GM12878 (cell line): ENCODE measurements at regions of chr2 and their contacts with region 1.

Region 1: GRCh38 chr2:213151437-213152064 is at the start of gene IKZF2:
- DNase-seq: peak; percentile 79
- ATAC-seq: peak; percentile 45
- H3K4me3 ChIP-seq: peak within 1 kb of the TSS; percentile 85
- H3K27ac ChIP-seq: peak within 1 kb of the TSS; percentile 92
- H3K4me1 ChIP-seq: peaks cover 4% of the 10 kb centered on the region
- H3K27me3 ChIP-seq: no peaks in the 10 kb centered on the region
- CTCF ChIP-seq: no peak
- EP300 ChIP-seq: peak in 1 of 2 experiments; percentile 19; a peak in 1 of 4 replicates
- POLR2A ChIP-seq: peak; percentile 88
- RAD21 ChIP-seq: no peak
- polyA plus RNA-seq, gene IKZF2: 15.2 to 22.5 TPM

Region 2: GRCh38 chr2:212863185-212863588 is 288.4 kb before region 1 on chr2:
- CTCF ChIA-PET with region 1: interaction called, 7 read pairs
- POLR2A ChIA-PET with region 1: no interaction called
- RAD21 ChIA-PET with region 1: interaction called, 12 read pairs
- SMC1A ChIA-PET with region 1: interaction called, 5 read pairs
- in situ Hi-C with region 1: no loop called
- intact Hi-C with region 1: loop called (anchors 1 kb)
- DNase-seq: peak; percentile 30
- ATAC-seq: peak; percentile 80
- H3K4me3 ChIP-seq: no peak overlapping the region
- H3K27ac ChIP-seq: no peak overlapping the region
- H3K4me1 ChIP-seq: no peaks in the 10 kb centered on the region
- H3K27me3 ChIP-seq: no peaks in the 10 kb centered on the region
- CTCF ChIP-seq: peak; percentile 52 to 69 (median 54); a peak in 4 of 6 replicates
- EP300 ChIP-seq: no peak
- POLR2A ChIP-seq: no peak
- RAD21 ChIP-seq: peak; percentile 82

Region 3: GRCh38 chr2:213036836-213037235 is 114.7 kb before region 1 on chr2:
- CTCF ChIA-PET with region 1: interaction called, 9 read pairs
- POLR2A ChIA-PET with region 1: interaction called, 7 read pairs
- RAD21 ChIA-PET with region 1: interaction called, 21 read pairs
- SMC1A ChIA-PET with region 1: interaction called, 28 read pairs
- in situ Hi-C with region 1: no loop called
- intact Hi-C with region 1: no loop called
- DNase-seq: no peak
- ATAC-seq: peak; percentile 2; the same call in 1 of the 3 replicates
- H3K4me3 ChIP-seq: no peak overlapping the region
- H3K27ac ChIP-seq: peak overlapping the region; percentile 17; the same call in 1 of the 2 replicates
- H3K4me1 ChIP-seq: peaks cover 26% of the 10 kb centered on the region
- H3K27me3 ChIP-seq: no peaks in the 10 kb centered on the region
- CTCF ChIP-seq: no peak
- EP300 ChIP-seq: no peak
- POLR2A ChIP-seq: no peak
- RAD21 ChIP-seq: no peak

Region 4: DNA sequence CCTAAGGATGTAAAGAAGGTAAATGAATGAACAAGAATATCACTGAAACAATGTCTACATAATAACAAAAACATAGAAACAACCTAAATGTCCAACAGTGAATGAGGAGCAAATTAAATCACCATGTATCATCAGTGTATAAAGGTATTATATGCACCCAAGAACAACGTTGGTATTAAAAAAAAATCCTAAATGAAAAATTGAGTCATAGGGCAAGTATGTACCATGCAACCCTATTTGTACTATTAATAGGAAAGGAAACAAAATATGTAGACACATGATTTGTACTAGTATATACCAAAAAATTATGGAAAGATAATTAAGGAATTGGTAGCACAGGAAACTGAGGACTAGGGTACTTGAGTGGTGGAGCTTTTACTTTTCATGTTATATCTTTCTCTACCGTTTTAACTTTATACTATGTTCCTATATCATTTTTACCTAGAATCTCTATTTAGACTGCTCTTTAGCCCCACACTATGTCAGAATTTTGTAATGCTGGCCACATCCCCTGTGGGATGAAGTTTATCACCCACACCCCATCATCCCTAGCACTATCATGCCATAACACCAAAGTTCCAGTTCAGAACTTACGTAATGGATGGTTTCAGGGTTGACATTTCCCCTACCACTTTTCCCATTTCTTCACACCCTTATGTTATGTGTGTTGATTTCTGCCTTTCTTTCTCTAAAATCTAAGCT is 25.8 kb before region 1 on chr2:
- CTCF ChIA-PET with region 1: interaction called, 19 read pairs
- POLR2A ChIA-PET with region 1: interaction called, 3 read pairs
- RAD21 ChIA-PET with region 1: interaction called, 9 read pairs
- SMC1A ChIA-PET with region 1: interaction called, 56 read pairs
- in situ Hi-C with region 1: no loop called
- intact Hi-C with region 1: no loop called
- DNase-seq: no peak
- ATAC-seq: peak; percentile 53
- H3K4me3 ChIP-seq: no peak overlapping the region
- H3K27ac ChIP-seq: no peak overlapping the region
- H3K4me1 ChIP-seq: peaks cover 20% of the 10 kb centered on the region; the same call in 1 of the 2 replicates
- H3K27me3 ChIP-seq: no peaks in the 10 kb centered on the region
- CTCF ChIP-seq: peak in 2 of 3 experiments; percentile 7 to 9; a peak in 1 of 6 replicates
- EP300 ChIP-seq: no peak
- POLR2A ChIP-seq: no peak
- RAD21 ChIP-seq: peak; percentile 22; the same call in 1 of the 2 replicates

Region 5: GRCh38 chr2:213175526-213176162 is 24.1 kb after region 1 on chr2:
- CTCF ChIA-PET with region 1: interaction called, 5 read pairs
- POLR2A ChIA-PET with region 1: interaction called, 4 read pairs
- RAD21 ChIA-PET with region 1: interaction called, 5 read pairs
- SMC1A ChIA-PET with region 1: interaction called, 97 read pairs
- in situ Hi-C with region 1: no loop called
- intact Hi-C with region 1: no loop called
- DNase-seq: no peak
- ATAC-seq: no peak
- H3K4me3 ChIP-seq: no peak overlapping the region
- H3K27ac ChIP-seq: no peak overlapping the region
- H3K4me1 ChIP-seq: peaks cover 7% of the 10 kb centered on the region; the same call in 1 of the 2 replicates
- H3K27me3 ChIP-seq: no peaks in the 10 kb centered on the region
- CTCF ChIP-seq: no peak
- EP300 ChIP-seq: no peak
- POLR2A ChIP-seq: no peak
- RAD21 ChIP-seq: no peak

Region 6: DNA sequence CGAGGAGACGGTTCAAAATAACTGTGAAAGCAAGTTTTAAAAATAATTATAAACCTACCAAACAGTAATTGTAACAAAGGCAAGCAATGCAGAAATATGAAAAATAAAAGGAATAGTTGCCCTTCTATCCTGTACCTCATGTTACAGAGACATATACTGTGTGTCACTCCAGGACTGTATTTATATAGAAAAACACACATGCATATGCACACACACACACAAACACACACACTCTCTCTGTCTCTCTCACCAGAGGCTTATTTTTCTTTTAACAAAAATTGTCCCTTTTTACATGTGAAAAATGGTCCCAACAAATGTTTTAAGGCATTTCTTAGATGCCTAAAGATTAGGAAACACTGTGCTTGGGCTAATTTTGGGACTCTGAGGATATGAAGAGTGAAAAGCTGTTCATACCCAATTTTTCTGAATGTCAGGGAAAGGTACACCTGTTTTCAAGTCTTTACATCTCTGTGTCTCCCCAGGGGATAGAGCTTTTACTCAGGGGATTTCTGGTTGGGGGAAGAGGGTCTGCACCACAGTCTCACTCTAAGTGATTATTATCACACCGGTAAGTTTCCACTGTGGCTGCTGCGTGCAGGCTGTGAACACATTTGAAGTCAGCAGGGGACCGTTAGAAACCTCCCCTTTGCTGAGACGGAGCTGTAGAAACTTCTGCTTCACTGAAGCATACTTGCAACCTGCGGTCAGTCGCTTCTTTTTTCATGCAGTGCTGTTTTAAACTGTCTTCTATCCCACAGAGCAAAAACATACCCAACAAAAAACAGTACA is 81.3 kb after region 1 on chr2:
- CTCF ChIA-PET with region 1: interaction called, 19 read pairs
- POLR2A ChIA-PET with region 1: interaction called, 232 read pairs
- RAD21 ChIA-PET with region 1: interaction called, 540 read pairs
- SMC1A ChIA-PET with region 1: interaction called, 467 read pairs
- in situ Hi-C with region 1: no loop called
- intact Hi-C with region 1: loop called (anchors 1 kb)
- DNase-seq: peak; percentile 100
- ATAC-seq: peak; percentile 72
- H3K4me3 ChIP-seq: peak overlapping the region; percentile 13; the same call in 1 of the 2 replicates
- H3K27ac ChIP-seq: peak overlapping the region; percentile 98
- H3K4me1 ChIP-seq: peaks cover 56% of the 10 kb centered on the region
- H3K27me3 ChIP-seq: no peaks in the 10 kb centered on the region
- CTCF ChIP-seq: no peak
- EP300 ChIP-seq: peak; percentile 70 to 93; a peak in 3 of 4 replicates
- POLR2A ChIP-seq: peak; percentile 60; the same call in 1 of the 2 replicates
- RAD21 ChIP-seq: peak; percentile 39; the same call in 1 of the 2 replicates

Region 7: GRCh38 chr2:213664817-213665216 is 513.3 kb after region 1 on chr2:
- CTCF ChIA-PET with region 1: no interaction called
- POLR2A ChIA-PET with region 1: no interaction called
- RAD21 ChIA-PET with region 1: no interaction called
- SMC1A ChIA-PET with region 1: no interaction called
- in situ Hi-C with region 1: no loop called
- intact Hi-C with region 1: no loop called
- DNase-seq: no peak
- ATAC-seq: no peak
- H3K4me3 ChIP-seq: no peak overlapping the region
- H3K27ac ChIP-seq: no peak overlapping the region
- H3K4me1 ChIP-seq: no peaks in the 10 kb centered on the region
- H3K27me3 ChIP-seq: no peaks in the 10 kb centered on the region
- CTCF ChIP-seq: no peak
- EP300 ChIP-seq: no peak
- POLR2A ChIP-seq: no peak
- RAD21 ChIP-seq: no peak

Region 8: GRCh38 chr2:214737188-214737587 is 1585.6 kb after region 1 on chr2:
- CTCF ChIA-PET with region 1: no interaction called
- POLR2A ChIA-PET with region 1: no interaction called
- RAD21 ChIA-PET with region 1: interaction called, 3 read pairs
- SMC1A ChIA-PET with region 1: no interaction called
- in situ Hi-C with region 1: no loop called
- intact Hi-C with region 1: loop called (anchors 10 kb)
- DNase-seq: peak; percentile 92
- ATAC-seq: peak; percentile 88
- H3K4me3 ChIP-seq: no peak overlapping the region
- H3K27ac ChIP-seq: peak overlapping the region; percentile 89
- H3K4me1 ChIP-seq: peaks cover 12% of the 10 kb centered on the region
- H3K27me3 ChIP-seq: no peaks in the 10 kb centered on the region
- CTCF ChIP-seq: no peak
- EP300 ChIP-seq: peak; percentile 97 to 98; a peak in 3 of 4 replicates
- POLR2A ChIP-seq: no peak
- RAD21 ChIP-seq: no peak